ENCODE measurements at regions of chr19 and their contacts with region 1.

Region 1: GRCh38 chr19:29735800-29736199 is 20.7 kb upstream of the C19orf12 start:
- DNase-seq: no peak
- H3K4me3 ChIP-seq: no peak overlapping the region
- H3K27ac ChIP-seq: no peak overlapping the region
- H3K4me1 ChIP-seq: no peaks in the 10 kb centered on the region
- H3K27me3 ChIP-seq: peaks cover 12% of the 10 kb centered on the region
- CTCF ChIP-seq: no peak
- EP300 ChIP-seq: no peak
- POLR2A ChIP-seq: no peak

Region 2: GRCh38 chr19:29623726-29624488 is 111.9 kb before region 1 on chr19:
- in situ Hi-C with region 1: no loop called
- intact Hi-C with region 1: no loop called
- DNase-seq: peak; percentile 25
- H3K4me3 ChIP-seq: no peak overlapping the region
- H3K27ac ChIP-seq: peak overlapping the region in 1 of 4 donors; percentile 25
- H3K4me1 ChIP-seq: no peaks in the 10 kb centered on the region
- H3K27me3 ChIP-seq: no peaks in the 10 kb centered on the region
- CTCF ChIP-seq: no peak
- EP300 ChIP-seq: no peak
- POLR2A ChIP-seq: no peak

Region 3: DNA sequence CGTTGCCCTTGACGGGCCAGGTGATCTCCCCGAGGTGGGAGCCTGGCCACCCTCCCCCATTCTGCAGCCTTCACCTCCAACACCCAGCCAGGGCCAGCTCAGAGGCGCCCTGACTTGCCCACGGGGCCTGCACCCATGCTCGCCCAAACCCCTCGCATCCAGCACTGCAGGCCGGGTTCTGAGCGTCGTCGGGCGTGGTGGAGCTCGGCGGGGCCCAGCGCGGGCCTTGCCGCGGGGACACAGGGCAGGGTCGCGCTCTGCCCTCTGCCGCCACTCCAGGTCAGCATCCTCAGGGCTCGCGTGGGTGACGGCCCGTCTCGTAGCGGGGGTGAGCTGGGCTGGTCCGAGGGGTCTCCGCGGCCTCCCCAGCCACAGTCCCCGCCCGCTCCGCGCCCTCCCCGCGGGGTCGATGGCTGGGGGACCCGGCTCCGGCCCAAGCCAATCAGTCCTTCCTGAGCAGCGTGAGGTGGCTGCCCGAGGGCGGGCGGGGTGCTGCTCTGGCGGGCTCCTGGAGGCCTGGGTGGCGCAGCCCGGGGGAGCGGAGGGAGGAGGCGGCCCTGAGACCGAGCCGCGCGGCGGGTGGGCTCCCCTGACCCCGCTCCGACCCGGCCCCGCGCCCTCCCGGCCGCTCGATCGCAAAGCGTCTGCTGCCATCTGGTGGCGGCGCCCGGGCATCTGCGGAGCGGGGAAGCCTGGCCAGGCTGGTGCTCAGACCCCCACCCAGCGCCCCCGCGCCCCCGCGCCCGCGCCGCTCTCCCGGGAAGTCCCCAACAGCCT is 137.4 kb after region 1 on chr19:
- in situ Hi-C with region 1: loop called in 1 of 4 experiments (anchors 10 kb)
- intact Hi-C with region 1: loop called (anchors 10 kb)
- DNase-seq: peak; percentile 49
- H3K4me3 ChIP-seq: peak overlapping the region; percentile 18 to 48 (median 31)
- H3K27ac ChIP-seq: no peak overlapping the region
- H3K4me1 ChIP-seq: peaks cover 7 to 15% (median 11%) of the 10 kb centered on the region in 4 donors
- H3K27me3 ChIP-seq: peaks cover 32% of the 10 kb centered on the region
- CTCF ChIP-seq: peak; percentile 40 to 88 (median 81)
- EP300 ChIP-seq: no peak
- POLR2A ChIP-seq: no peak

Measured in transverse colon (tissue), 4 donors.